ENCODE measurements at regions of chr7 and their contacts with region 1.

Region 1: DNA sequence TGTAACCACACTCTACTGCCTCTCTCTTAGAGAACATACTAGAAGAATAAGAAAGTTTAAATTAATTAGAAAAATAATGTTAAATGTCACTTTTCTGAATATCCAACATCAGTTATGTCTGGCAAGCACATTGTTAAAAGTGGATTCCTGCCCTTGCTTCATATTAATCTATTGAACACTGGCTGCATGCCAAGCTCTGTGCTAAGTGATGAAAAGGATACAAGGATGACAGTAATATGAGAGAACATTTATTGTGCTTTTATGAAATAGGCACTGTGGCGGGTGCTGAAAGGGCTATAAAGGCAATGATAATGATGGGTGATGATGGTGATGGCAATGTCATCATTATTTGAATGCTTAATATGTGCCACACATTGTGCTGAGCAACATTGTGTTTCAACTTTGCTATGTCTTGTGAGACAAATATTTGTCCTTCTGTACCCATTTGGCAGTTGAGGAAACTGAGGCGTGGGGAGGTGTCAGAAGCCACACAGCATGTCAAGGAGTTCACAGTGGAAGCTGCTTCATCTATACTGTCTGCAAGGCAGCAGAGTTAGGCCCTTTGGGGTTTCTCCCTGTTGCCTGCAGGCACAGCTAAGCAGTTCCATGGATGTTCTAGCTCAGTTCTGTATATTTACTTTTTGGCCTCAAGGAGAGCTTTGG is 64.2 kb upstream of the RAPGEF5 start:
- DNase-seq: no peak
- H3K4me3 ChIP-seq: no peak overlapping the region
- H3K27ac ChIP-seq: peak overlapping the region; percentile 87
- H3K4me1 ChIP-seq: peaks cover 68% of the 10 kb centered on the region
- CTCF ChIP-seq: no peak

Region 2: DNA sequence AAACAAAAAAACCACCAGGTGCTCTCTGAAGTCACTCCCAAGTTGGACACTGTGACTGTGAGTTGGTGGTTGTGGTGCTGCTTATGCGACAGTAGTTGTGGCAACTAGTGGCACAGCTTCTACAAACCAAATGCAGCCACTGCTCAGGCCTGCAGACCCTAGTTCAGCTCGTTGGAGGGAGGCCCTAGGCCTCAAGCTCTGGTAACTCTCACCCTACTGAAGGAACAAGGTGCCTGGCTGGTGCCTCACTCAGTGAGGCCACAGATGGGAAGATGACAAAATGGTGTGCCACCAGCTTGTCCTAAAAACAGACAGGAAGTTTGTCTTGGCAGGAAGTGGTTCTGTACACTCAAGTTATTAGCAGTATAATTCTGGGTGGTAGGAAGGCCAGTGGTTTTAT is 18.9 kb before region 1 on chr7:
- CTCF ChIA-PET with region 1: no interaction called
- POLR2A ChIA-PET with region 1: interaction called, 51 read pairs
- intact Hi-C with region 1: no loop called
- DNase-seq: peak; percentile 72
- H3K4me3 ChIP-seq: peak overlapping the region; percentile 24
- H3K27ac ChIP-seq: peak overlapping the region; percentile 75
- H3K4me1 ChIP-seq: peaks cover 33% of the 10 kb centered on the region
- CTCF ChIP-seq: no peak